ENCODE measurements at regions of chr3 and their contacts with region 1.

Region 1: DNA sequence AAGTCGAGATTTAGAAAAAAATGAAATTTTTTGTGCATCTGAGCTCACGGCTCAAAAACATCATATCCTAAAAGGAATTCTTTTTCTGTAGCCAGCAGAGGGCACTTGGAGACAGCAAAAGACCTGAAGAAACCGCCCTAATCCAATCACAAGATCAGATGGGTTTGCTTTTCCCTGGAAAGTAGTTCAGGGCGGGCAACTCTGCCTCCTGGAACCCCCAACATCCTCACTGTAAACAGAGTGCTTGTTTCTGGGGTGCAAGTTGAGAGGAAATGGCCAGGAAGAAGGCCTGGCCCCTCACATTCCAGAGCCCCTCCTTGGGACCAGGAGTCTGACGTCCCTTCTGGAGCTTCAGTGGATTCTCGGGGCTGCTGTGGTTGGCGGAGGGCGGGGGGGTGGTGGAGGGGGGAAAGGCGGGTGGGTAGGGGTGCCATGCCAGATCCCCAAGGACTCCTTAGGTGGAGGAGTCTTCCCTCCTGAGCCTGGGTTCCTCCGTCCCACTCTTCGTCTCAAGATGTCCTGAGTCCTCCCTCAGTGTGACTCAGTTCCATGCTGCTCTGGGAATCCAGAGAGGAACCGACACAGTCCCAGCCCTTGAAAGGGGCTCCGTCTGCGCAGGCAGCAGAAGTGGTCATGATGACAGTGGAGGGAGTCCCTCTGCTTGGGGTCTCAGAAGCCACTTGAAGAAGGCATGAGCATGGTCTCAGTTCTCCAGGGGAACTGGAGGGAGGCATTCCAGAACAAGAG is 35.9 kb downstream of the CCK start:
- DNase-seq: peak in 1 of 2 experiments; percentile 48
- H3K4me3 ChIP-seq: no peak overlapping the region
- H3K4me3 Mint-ChIP-seq: no peak overlapping the region
- H3K27ac Mint-ChIP-seq: no peak overlapping the region
- H3K4me1 ChIP-seq: peaks cover 4% of the 10 kb centered on the region; the same call in 1 of the 2 replicates
- H3K4me1 Mint-ChIP-seq: no peaks in the 10 kb centered on the region
- H3K27me3 ChIP-seq: no peaks in the 10 kb centered on the region
- H3K27me3 Mint-ChIP-seq: peaks cover 12% of the 10 kb centered on the region
- CTCF ChIP-seq: peak; percentile 55 to 61

Region 2: DNA sequence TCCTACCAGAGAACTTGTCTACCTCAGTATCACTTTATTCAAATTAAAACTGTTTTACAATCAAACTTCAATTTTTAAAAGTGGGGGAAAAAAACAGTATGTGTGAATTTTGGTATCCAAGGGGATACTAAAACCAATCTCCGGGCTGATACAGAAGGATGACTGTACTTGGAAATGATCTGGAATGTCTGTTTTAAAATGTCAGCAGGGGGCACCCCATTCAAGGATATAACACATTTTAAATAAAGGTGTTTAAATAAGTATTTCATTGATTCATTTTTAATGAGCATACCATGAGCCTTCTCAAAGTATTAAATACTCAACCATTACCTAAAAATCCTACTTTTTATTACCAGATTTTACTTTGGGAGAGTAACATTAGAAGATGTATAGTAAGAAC is 336.1 kb before region 1 on chr3:
- CTCF ChIA-PET with region 1: interaction called, 3 read pairs
- POLR2A ChIA-PET with region 1: no interaction called
- intact Hi-C with region 1: loop called (anchors 1 kb)
- DNase-seq: peak in 1 of 2 experiments; percentile 44
- H3K4me3 ChIP-seq: no peak overlapping the region
- H3K4me3 Mint-ChIP-seq: no peak overlapping the region
- H3K27ac Mint-ChIP-seq: no peak overlapping the region
- H3K4me1 ChIP-seq: no peaks in the 10 kb centered on the region
- H3K4me1 Mint-ChIP-seq: no peaks in the 10 kb centered on the region
- H3K27me3 ChIP-seq: no peaks in the 10 kb centered on the region
- H3K27me3 Mint-ChIP-seq: no peaks in the 10 kb centered on the region
- CTCF ChIP-seq: peak in 1 of 2 experiments; percentile 34

Region 3: DNA sequence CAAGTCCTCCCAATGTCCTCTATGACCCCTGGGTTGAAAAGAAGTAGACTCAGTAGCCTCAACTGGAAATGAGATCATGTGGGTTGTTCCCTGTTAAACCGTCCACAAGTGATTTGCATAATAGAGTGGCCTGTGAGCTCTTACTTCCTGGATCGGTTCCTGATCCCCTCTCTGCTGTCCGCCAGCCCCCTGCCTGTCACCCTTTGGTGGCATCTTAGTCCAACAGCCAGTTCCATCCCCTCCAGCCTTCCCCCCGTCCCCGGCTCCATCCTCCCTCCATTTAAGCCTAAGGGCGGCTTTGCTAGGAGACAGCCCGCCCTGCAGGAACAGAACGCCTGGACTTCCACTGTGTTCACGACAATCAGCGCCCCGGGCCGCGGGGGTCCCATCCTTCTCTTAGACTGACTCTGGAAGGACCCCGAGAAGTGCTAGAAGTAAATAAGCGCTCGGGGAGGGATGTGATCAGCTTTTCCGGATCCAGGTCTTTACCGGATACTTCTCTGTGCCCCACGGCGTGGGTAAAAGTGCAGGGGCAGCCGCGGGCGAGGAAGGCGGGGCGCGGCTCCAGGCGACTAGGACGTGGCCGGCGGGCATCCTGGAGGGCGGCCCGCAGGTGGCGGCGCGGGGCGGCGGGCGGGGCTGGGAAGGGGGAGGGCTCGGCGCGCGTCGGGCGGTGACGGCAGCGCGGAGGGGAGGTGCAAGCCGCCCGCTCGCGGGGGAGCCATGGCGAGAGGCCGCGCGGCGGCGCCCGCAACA is 217.0 kb before region 1 on chr3:
- CTCF ChIA-PET with region 1: no interaction called
- POLR2A ChIA-PET with region 1: no interaction called
- intact Hi-C with region 1: no loop called
- DNase-seq: peak; percentile 59 to 76
- H3K4me3 ChIP-seq: peak overlapping the region; percentile 89
- H3K4me3 Mint-ChIP-seq: peak overlapping the region; percentile 81
- H3K27ac Mint-ChIP-seq: peak overlapping the region; percentile 72
- H3K4me1 ChIP-seq: 0 out of 2 replicates have a peak, but pooled peaks cover 9% of the 10 kb centered on the region
- H3K4me1 Mint-ChIP-seq: peaks cover 21% of the 10 kb centered on the region
- H3K27me3 ChIP-seq: no peaks in the 10 kb centered on the region; the same call in 1 of the 2 replicates
- H3K27me3 Mint-ChIP-seq: no peaks in the 10 kb centered on the region
- CTCF ChIP-seq: no peak

Region 4: DNA sequence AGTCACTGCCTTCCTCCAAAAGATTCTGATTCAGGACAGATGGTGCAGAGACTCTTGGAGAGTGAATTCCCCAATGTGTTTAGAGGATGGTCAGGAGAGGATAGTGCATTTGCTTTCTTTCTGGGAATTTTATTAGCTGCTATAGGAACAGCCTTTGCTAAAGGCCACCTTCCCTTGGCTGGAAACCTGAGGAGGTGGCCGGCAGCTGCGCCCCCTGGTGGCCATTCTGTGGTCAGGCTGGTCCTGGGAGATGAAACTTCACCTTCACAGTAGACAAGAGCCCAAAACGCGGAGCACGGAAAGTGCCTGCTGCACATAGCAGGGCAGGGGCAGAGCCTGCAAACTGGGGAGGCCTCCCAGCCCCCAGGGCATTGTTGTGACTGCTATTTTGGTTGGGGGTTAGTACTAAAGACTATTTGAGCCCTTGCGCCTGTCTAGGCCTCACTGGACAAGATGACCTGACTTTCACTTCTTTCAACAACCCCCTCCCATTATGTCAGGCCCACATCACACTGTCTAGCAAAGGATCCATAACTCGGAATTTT is 317.4 kb after region 1 on chr3:
- CTCF ChIA-PET with region 1: interaction called, 3 read pairs
- POLR2A ChIA-PET with region 1: no interaction called
- intact Hi-C with region 1: loop called (anchors 1 kb)
- DNase-seq: peak; percentile 59 to 76
- H3K4me3 ChIP-seq: no peak overlapping the region
- H3K4me3 Mint-ChIP-seq: no peak overlapping the region
- H3K27ac Mint-ChIP-seq: no peak overlapping the region
- H3K4me1 ChIP-seq: no peaks in the 10 kb centered on the region
- H3K4me1 Mint-ChIP-seq: no peaks in the 10 kb centered on the region
- H3K27me3 ChIP-seq: no peaks in the 10 kb centered on the region
- H3K27me3 Mint-ChIP-seq: no peaks in the 10 kb centered on the region
- CTCF ChIP-seq: peak; percentile 87 to 94